ENCODE measurements at regions of chr2 and their contacts with region 1.

Region 1: DNA sequence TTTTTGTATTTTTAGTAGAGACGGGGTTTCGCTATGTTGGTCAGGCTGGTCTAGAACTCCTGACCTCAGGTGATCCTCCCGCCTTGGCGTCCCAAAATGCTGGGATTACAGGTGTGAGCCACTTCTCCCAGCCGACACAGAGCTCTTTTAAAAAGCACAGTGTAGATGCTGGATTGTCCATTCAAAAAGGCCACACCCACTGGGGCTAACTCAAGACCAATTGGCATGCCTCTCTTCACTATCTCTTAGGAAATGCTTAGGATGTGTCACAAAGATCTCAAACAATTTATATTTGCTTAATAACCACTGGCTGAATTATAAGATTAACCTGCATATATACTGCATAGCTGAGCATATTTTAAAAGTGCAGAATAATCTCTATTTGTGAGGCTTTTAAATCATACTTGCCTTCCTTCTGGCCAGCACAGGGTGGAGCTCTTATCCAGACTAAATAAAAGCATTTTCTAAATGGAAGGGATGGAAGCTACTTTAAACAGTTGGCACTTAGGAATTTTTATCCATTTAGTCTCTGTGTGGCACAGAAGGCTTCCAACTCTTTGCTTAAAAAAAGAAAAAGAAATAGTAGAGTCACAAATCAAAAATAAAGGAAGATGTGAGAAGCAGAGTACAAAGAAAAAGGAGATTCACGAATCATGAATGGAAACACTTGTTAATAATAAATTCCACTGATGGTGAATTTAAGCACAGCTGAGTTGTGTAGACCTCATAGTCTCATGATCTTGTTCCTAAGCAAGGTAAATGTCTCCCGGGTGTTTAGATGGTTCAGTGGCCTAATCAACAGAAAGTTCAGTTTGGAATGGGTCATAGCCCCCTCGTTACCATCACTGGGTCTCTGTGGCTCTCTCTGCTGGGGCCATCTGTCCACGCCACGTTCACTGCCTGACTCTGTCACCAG is 22.4 kb downstream of the CRYGD start:
- DNase-seq: peak in 1 of 10 donors; percentile 22
- H3K4me3 ChIP-seq: no peak overlapping the region
- H3K27ac ChIP-seq: no peak overlapping the region
- H3K27me3 ChIP-seq: no peaks in the 10 kb centered on the region
- CTCF ChIP-seq: peak in 51 of 56 donors; percentile 10 to 74 (median 44)

Region 2: DNA sequence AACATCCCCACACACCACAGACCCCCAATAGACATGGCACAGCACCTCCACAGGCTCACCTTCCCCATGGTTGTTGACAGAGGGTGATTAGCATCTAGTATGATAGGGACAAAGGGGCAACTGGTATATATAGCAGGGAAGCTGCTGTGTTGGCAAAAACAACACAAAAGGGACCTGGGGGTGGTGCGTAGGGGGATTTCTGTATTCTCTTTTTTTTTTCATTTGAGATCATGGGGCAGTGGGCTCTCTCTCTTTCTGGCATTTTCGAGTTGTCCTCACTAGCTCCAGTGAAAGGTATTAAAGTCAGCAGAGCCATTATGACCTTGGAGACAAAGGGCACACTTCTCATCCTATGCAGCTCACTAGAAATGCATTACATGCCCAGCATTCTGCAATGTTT is 61.5 kb after region 1 on chr2 and contains the start of gene CRYGA:
- intact Hi-C with region 1: no loop called
- DNase-seq: no peak
- H3K4me3 ChIP-seq: no peak within 1 kb of the TSS
- H3K27ac ChIP-seq: peak within 1 kb of the TSS in 3 of 59 donors; percentile 22 to 47 (median 42)
- H3K27me3 ChIP-seq: no peaks in the 10 kb centered on the region
- CTCF ChIP-seq: no peak
- total RNA-seq, gene CRYGA: 0.66 to 2.2 (median 0.97) TPM in 24 of 120 experiments, not detected in the others

Region 3: GRCh38 chr2:208175069-208175839 is 73.3 kb after region 1 on chr2:
- intact Hi-C with region 1: loop called in 1 of 2 experiments (anchors 5 kb)
- DNase-seq: peak; percentile 47 to 91 (median 78)
- H3K4me3 ChIP-seq: peak overlapping the region in 28 of 59 donors; percentile 0 to 44 (median 14)
- H3K27ac ChIP-seq: peak overlapping the region in 20 of 59 donors; percentile 0 to 52 (median 26)
- H3K27me3 ChIP-seq: no peaks in the 10 kb centered on the region
- CTCF ChIP-seq: peak; percentile 79 to 96 (median 92)